ENCODE measurements at regions of chr3 and their contacts with region 1.

Region 1: DNA sequence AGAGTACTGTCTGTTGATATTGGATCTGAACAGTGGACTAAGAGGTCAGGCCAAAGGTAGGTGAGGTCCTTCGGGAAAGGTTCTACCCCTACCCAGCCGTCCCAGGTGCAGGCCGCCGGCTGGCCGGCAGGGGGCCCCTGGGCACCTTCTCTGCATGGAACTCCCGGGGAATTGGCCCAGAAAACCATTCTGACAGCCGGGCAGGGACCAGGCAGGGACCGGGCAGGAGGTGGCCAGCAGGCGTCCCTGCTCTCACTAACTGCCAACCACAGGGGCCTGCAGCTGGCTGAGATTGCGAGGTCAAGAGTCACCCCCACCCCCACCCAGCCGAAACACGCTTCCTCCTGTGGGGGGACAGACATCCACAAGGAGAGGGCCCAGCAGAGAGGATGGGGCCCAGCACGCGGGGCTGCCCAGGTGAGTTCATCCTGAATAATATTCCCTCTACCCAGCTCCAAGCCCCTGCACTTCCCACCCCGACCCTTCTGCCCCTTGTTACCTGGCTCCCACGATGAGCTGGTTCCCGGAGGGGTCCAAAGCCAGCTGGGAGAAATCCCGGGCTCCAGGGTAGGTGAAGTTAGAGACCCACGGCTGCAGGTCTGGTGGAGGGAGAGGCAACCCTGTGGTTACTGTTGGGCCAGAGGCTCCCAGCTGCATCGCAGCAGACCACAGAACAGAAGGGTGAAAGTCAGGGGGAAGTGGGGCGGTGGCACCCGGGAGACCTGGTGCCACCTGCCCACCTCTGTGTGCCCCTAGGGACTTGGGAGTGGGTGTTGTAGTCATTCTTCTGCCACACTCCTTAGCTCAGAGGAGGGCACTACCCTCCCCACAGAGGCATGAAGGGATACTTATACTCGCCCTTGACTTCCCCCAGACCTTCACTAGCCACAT is 84.4 kb downstream of the SEMA5B start:
- DNase-seq: peak; percentile 80
- H3K4me3 Mint-ChIP-seq: no peak overlapping the region
- H3K27ac Mint-ChIP-seq: no peak overlapping the region
- H3K4me1 Mint-ChIP-seq: peaks cover 4% of the 10 kb centered on the region
- H3K27me3 Mint-ChIP-seq: no peaks in the 10 kb centered on the region
- CTCF ChIP-seq: peak; percentile 90

Region 2: DNA sequence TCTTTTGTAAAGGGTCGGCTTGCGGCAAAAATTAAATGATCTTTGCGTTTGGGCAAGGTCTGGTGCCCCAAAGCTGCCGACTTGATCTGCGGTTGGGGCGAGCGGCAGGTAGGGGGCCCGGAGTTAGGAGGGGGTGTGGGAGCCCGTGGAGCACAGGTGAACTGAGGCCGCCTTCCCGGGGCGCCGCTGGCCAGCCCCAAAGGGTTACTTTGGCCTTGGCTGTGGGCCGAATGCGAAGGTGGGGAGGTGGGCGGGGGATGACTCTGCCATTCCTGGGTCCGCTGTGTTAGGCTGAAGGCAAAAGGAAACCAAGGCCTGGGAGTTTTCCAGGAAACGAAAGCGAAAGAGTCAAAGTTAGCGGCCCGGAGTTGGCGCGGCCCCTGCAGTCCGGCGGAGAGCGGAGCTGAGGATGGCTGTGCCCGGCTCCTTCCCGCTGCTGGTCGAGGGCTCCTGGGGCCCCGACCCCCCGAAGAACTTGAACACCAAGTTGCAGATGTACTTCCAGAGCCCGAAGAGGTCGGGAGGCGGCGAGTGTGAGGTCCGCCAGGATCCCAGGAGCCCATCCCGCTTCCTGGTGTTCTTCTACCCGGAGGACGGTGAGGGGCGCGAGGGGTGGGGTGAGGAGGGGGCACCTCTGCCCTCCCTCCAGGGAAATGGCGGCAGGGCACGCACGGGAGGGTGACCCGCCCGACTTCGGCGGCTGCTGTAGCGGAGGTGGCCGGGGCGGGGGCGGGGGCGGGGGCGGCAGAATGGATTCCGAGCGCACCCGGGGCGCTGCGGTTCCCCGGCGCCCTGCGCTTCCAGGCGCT is 262.5 kb before region 1 on chr3 and contains the start of gene PARP14:
- CTCF ChIA-PET with region 1: no interaction called
- POLR2A ChIA-PET with region 1: no interaction called
- intact Hi-C with region 1: no loop called
- DNase-seq: peak; percentile 80
- H3K4me3 Mint-ChIP-seq: peak within 1 kb of the TSS; percentile 77
- H3K27ac Mint-ChIP-seq: peak within 1 kb of the TSS; percentile 83
- H3K4me1 Mint-ChIP-seq: peaks cover 16% of the 10 kb centered on the region
- H3K27me3 Mint-ChIP-seq: no peaks in the 10 kb centered on the region
- CTCF ChIP-seq: no peak
- total RNA-seq, gene PARP14: 15.5 and 23.8 TPM in 2 replicates

Region 3: GRCh38 chr3:122754929-122755328 is 188.3 kb before region 1 on chr3:
- CTCF ChIA-PET with region 1: interaction called, 4 read pairs
- POLR2A ChIA-PET with region 1: no interaction called
- intact Hi-C with region 1: loop called (anchors 2 kb)
- DNase-seq: peak; percentile 74
- H3K4me3 Mint-ChIP-seq: no peak overlapping the region
- H3K27ac Mint-ChIP-seq: no peak overlapping the region
- H3K4me1 Mint-ChIP-seq: no peaks in the 10 kb centered on the region
- H3K27me3 Mint-ChIP-seq: no peaks in the 10 kb centered on the region
- CTCF ChIP-seq: peak; percentile 64

Region 4: DNA sequence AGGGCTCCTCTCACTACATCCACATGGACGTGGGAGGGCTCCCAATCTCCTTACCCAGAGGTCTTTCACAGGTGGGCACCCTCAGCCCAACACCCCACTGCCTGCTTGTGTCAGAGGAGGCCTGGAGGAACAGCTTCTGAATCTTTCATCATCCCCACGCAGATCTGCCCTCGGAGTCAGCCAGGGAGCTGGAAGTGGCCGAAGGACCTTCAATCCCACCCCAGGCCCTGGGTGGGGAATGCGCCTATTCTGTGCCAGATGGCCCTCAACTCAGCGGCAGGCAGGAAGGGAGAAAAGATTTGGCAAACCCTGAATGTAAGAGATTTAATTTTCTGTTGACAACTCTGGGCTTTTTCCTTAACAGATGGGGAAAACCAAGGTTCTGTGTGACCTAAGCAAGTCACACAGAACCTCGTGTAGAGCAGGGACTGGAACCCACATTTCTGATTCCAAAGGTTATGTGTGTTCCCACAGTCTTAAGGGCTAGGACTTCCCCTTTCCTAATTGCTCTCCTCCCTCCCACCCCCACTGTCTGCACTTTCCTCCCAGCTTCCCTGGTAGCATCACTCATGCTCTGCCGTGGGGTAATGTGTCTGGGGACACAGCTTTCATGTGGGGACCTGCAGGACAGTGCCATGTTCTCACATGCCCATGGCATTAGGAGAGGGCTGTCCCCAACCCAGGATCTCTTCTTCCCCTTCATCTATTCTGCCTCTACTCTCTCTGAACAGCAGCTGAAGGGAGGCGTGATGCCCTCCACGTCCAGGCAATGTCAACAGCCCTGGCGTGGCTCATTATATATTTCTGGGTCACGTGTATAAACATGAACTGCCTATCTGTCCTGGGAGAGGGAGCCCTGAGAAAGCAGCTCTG is 13.8 kb before region 1 on chr3:
- CTCF ChIA-PET with region 1: interaction called, 10 read pairs
- POLR2A ChIA-PET with region 1: interaction called, 4 read pairs
- intact Hi-C with region 1: no loop called
- DNase-seq: no peak
- H3K4me3 Mint-ChIP-seq: no peak overlapping the region
- H3K27ac Mint-ChIP-seq: no peak overlapping the region
- H3K4me1 Mint-ChIP-seq: peaks cover 34% of the 10 kb centered on the region
- H3K27me3 Mint-ChIP-seq: no peaks in the 10 kb centered on the region
- CTCF ChIP-seq: no peak

Region 5: DNA sequence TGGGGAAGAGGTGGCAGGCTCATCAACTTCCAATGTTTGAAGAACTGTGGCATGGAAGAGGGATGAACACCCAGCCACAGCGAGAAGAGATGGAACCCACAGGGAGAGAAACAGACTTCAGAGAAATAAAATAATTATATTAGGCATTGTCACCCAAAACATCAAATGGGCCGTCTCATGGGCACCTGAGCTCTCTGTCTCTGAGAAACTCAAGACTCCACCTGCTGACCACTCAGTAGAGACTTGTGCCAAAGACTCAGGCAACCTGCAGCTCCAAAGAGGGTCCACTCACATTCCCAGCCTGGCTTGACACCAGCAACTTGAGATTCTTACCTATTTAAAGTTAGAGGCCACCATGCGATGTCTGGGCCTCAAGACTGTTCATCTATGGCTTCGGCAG is 72.4 kb after region 1 on chr3:
- CTCF ChIA-PET with region 1: interaction called, 14 read pairs
- POLR2A ChIA-PET with region 1: no interaction called
- intact Hi-C with region 1: no loop called
- DNase-seq: peak; percentile 26
- H3K4me3 Mint-ChIP-seq: no peak overlapping the region
- H3K27ac Mint-ChIP-seq: no peak overlapping the region
- H3K4me1 Mint-ChIP-seq: no peaks in the 10 kb centered on the region
- H3K27me3 Mint-ChIP-seq: peaks cover 42% of the 10 kb centered on the region
- CTCF ChIP-seq: peak; percentile 7

Region 6: GRCh38 chr3:123066896-123067688 is 123.9 kb after region 1 on chr3 and contains the start of gene PDIA5:
- CTCF ChIA-PET with region 1: interaction called, 11 read pairs
- POLR2A ChIA-PET with region 1: no interaction called
- intact Hi-C with region 1: no loop called
- DNase-seq: peak; percentile 92
- H3K4me3 Mint-ChIP-seq: peak within 1 kb of the TSS; percentile 87
- H3K27ac Mint-ChIP-seq: peak within 1 kb of the TSS; percentile 84
- H3K4me1 Mint-ChIP-seq: peaks cover 30% of the 10 kb centered on the region
- H3K27me3 Mint-ChIP-seq: no peaks in the 10 kb centered on the region
- CTCF ChIP-seq: no peak
- total RNA-seq, gene PDIA5: 42.7 and 47.7 TPM in 2 replicates

Region 7: GRCh38 chr3:123138839-123139444 is 195.8 kb after region 1 on chr3:
- CTCF ChIA-PET with region 1: no interaction called
- POLR2A ChIA-PET with region 1: no interaction called
- intact Hi-C with region 1: no loop called
- DNase-seq: no peak
- H3K4me3 Mint-ChIP-seq: no peak overlapping the region
- H3K27ac Mint-ChIP-seq: no peak overlapping the region
- H3K4me1 Mint-ChIP-seq: no peaks in the 10 kb centered on the region
- H3K27me3 Mint-ChIP-seq: no peaks in the 10 kb centered on the region
- CTCF ChIP-seq: no peak